ENCODE measurements at regions of chr16 and their contacts with region 1.

Region 1: GRCh38 chr16:28317040-28317880 is 24.9 kb downstream of the SBK1 start:
- DNase-seq: peak; percentile 42
- ATAC-seq: peak; percentile 55
- H3K4me3 ChIP-seq: no peak overlapping the region
- H3K27ac ChIP-seq: no peak overlapping the region
- H3K4me1 ChIP-seq: no peaks in the 10 kb centered on the region
- H3K27me3 ChIP-seq: peaks cover 2 to 15% of the 10 kb centered on the region in 2 experiments; a peak in 2 of 5 replicates
- CTCF ChIP-seq: peak; percentile 95
- EP300 ChIP-seq: no peak
- POLR2A ChIP-seq: no peak
- RAD21 ChIP-seq: peak; percentile 80

Region 2: GRCh38 chr16:28258567-28258966 is 58.7 kb before region 1 on chr16:
- CTCF ChIA-PET with region 1: no interaction called
- POLR2A ChIA-PET with region 1: no interaction called
- in situ Hi-C with region 1: loop called (anchors 10 kb)
- intact Hi-C with region 1: no loop called
- DNase-seq: no peak
- ATAC-seq: no peak; the same call in 1 of the 3 replicates
- H3K4me3 ChIP-seq: no peak overlapping the region
- H3K27ac ChIP-seq: no peak overlapping the region
- H3K4me1 ChIP-seq: no peaks in the 10 kb centered on the region
- H3K27me3 ChIP-seq: peaks cover 8 to 53% of the 10 kb centered on the region in 2 experiments; a peak in 4 of 5 replicates
- CTCF ChIP-seq: no peak
- EP300 ChIP-seq: no peak
- POLR2A ChIP-seq: no peak
- RAD21 ChIP-seq: no peak

Region 3: GRCh38 chr16:28277537-28278388 is 39.5 kb before region 1 on chr16:
- CTCF ChIA-PET with region 1: interaction called, 91 read pairs
- POLR2A ChIA-PET with region 1: no interaction called
- in situ Hi-C with region 1: loop called (anchors 5 kb)
- intact Hi-C with region 1: loop called (anchors 1 kb)
- DNase-seq: peak; percentile 73
- ATAC-seq: peak; percentile 92
- H3K4me3 ChIP-seq: peak overlapping the region; percentile 34 to 74 (median 38)
- H3K27ac ChIP-seq: no peak overlapping the region
- H3K4me1 ChIP-seq: peaks cover 10% of the 10 kb centered on the region; the same call in 1 of the 2 replicates
- H3K27me3 ChIP-seq: peaks cover 3 to 42% of the 10 kb centered on the region in 2 experiments; a peak in 4 of 5 replicates
- CTCF ChIP-seq: peak; percentile 99
- EP300 ChIP-seq: no peak
- POLR2A ChIP-seq: no peak
- RAD21 ChIP-seq: peak; percentile 99

Region 4: GRCh38 chr16:28569021-28569420 is 251.8 kb after region 1 on chr16:
- CTCF ChIA-PET with region 1: no interaction called
- POLR2A ChIA-PET with region 1: no interaction called
- in situ Hi-C with region 1: no loop called
- intact Hi-C with region 1: no loop called
- DNase-seq: no peak
- ATAC-seq: no peak
- H3K4me3 ChIP-seq: no peak overlapping the region
- H3K27ac ChIP-seq: no peak overlapping the region
- H3K4me1 ChIP-seq: no peaks in the 10 kb centered on the region
- H3K27me3 ChIP-seq: no peaks in the 10 kb centered on the region
- CTCF ChIP-seq: no peak
- EP300 ChIP-seq: no peak
- POLR2A ChIP-seq: no peak
- RAD21 ChIP-seq: no peak